ENCODE measurements at regions of chr4 and their contacts with region 1.

Region 1: DNA sequence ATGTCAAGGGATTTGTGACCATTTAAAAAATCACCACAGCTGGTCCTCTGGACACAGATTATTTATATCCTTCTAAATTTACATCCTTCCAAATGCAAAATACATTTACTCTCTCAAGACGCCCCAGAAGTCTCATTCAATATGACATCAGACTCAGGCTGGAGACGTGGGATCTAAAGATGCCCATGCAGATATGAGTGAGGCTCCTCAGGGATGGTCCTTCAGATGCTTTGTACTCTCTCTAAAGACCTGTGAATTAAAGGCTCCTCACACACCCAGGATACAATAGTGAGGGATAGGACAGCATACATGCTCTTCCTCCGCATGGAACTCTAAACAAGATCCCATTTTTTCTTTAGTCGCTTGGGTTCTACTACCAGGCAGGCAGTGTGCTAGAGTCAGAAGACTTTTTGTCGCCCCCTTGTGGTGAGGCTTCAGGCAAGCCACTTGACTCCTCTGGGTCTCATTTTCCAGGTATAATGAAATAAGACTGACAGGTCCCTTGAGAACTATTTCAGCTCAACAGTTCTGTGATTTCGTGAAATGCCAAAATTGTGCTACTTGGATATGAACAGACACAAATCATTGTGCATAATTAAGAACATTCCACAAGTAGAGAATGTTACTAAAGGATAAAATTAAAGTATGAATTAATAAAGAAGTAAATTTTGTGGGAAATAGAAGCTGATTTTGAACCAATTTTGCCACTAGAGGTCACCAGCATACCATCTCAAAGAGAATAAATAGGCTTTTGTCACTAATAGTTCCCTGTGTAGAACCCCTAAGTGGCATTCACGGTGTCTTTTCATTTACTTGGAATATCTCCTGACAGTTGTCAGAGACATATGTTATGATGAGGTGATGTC is 13.7 kb upstream of the SCOC start:
- DNase-seq: peak; percentile 82
- H3K4me3 ChIP-seq: no peak overlapping the region
- H3K27ac ChIP-seq: no peak overlapping the region
- H3K4me1 ChIP-seq: no peaks in the 10 kb centered on the region
- H3K27me3 ChIP-seq: no peaks in the 10 kb centered on the region
- CTCF ChIP-seq: peak; percentile 68 to 88 (median 82)
- POLR2A ChIP-seq: no peak

Region 2: DNA sequence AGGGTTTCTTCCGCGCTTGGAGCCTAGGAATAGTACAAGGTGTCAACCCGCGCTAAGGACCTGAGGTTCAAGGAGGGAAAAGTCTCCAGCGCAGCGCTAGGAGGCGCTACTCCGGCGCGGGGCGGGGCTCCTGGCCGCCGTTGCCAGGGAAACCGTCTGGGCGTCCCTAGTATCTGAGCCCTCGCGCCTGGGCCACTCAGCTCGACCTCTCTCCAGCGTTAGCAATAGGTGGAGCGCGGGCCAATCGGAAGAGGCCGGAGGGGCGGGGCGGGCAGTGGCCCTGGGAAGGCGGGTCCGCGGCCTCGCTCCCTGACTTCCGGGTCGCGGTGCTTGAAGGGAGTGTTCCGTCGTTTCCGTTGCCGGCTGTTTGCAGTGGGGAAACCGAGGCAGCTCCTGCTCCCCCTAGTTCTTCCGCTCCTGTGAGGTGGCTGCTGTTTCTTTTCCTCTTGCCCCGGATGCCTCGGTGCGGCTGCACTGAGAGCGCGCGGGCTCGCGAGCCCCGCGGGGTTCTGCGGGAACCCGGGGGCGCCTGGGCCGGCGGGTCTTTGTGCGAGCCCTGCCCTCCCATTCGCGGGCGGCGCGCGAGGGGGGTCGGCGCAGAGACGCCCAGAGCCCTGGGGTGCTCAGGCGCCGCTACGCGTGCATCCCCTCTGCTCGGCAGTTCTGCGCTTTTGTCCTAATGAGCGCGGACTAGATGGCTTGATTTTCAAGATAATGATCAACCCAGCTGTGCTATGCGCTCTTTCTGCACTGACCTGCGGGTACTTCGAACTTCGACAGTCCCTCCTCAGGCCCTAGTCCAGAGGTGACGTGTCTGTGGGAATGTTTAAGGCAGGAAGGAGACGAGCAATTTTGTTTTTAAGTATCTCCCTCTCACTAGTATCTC is 164.3 kb after region 1 on chr4 and contains the start of gene ELMOD2:
- intact Hi-C with region 1: no loop called
- DNase-seq: peak; percentile 97
- H3K4me3 ChIP-seq: peak within 1 kb of the TSS; percentile 67 to 99
- H3K27ac ChIP-seq: peak within 1 kb of the TSS; percentile 65 to 81
- H3K4me1 ChIP-seq: no peaks in the 10 kb centered on the region
- H3K27me3 ChIP-seq: no peaks in the 10 kb centered on the region
- CTCF ChIP-seq: peak; percentile 45 to 94 (median 88)
- POLR2A ChIP-seq: peak; percentile 46
- total RNA-seq, gene ELMOD2: 35.0 to 39.2 TPM

Region 3: GRCh38 chr4:140609548-140610425 is 250.0 kb after region 1 on chr4:
- intact Hi-C with region 1: loop called (anchors 5 kb)
- DNase-seq: no peak
- H3K4me3 ChIP-seq: no peak overlapping the region
- H3K27ac ChIP-seq: no peak overlapping the region
- H3K4me1 ChIP-seq: no peaks in the 10 kb centered on the region
- H3K27me3 ChIP-seq: no peaks in the 10 kb centered on the region
- CTCF ChIP-seq: peak; percentile 10 to 65 (median 62)
- POLR2A ChIP-seq: no peak

Region 4: DNA sequence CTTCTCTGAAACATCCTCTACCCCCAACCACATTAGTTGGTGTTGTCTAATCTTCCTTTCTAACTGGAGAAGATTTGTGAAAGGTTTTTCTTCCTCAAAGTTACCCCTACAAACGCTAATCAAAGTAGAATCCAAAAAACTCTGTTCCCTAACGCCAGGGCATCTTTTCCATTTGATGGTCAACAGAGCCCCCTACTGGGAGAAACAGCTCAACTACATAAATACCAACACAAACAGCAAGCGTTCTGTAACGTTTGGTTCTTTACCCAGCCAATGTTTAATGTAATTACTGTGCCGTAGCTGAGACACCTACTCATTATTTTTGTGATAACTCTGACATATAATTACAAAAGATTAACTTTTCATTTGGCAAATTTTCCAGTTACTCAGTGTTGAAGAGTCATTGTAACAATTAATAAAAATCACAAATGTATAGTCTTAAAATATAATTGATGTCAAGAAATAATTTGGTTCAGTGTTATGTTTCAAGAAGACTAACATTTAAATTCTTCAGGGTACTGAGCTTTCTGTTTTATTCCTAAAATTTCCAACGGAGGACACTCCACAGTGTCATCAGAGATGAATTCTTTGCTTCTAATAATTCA is 491.3 kb after region 1 on chr4:
- intact Hi-C with region 1: loop called (anchors 5 kb)
- DNase-seq: peak; percentile 56
- H3K4me3 ChIP-seq: no peak overlapping the region
- H3K27ac ChIP-seq: no peak overlapping the region
- H3K4me1 ChIP-seq: no peaks in the 10 kb centered on the region
- H3K27me3 ChIP-seq: no peaks in the 10 kb centered on the region
- CTCF ChIP-seq: peak; percentile 26 to 88 (median 78)
- POLR2A ChIP-seq: no peak